ENCODE measurements at regions of chr11 and their contacts with region 1.

Region 1: GRCh38 chr11:8768625-8769333 is 86.2 kb downstream of the RPL27A start:
- DNase-seq: peak; percentile 15 to 61
- H3K4me3 ChIP-seq: no peak overlapping the region
- H3K27ac ChIP-seq: peak overlapping the region; percentile 66
- H3K4me1 ChIP-seq: peaks cover 30% of the 10 kb centered on the region
- H3K27me3 ChIP-seq: no peaks in the 10 kb centered on the region
- CTCF ChIP-seq: peak; percentile 28; the same call in 1 of the 2 replicates

Region 2: GRCh38 chr11:8604078-8604723 is 164.6 kb before region 1 on chr11:
- CTCF ChIA-PET with region 1: no interaction called
- POLR2A ChIA-PET with region 1: no interaction called
- intact Hi-C with region 1: no loop called
- DNase-seq: peak; percentile 33 to 92
- H3K4me3 ChIP-seq: no peak overlapping the region
- H3K27ac ChIP-seq: 0 out of 2 replicates have a peak overlapping the region, but pooled peaks have one; percentile 25
- H3K4me1 ChIP-seq: peaks cover 12% of the 10 kb centered on the region; the same call in 1 of the 2 replicates
- H3K27me3 ChIP-seq: no peaks in the 10 kb centered on the region
- CTCF ChIP-seq: peak; percentile 57; the same call in 1 of the 2 replicates

Region 3: DNA sequence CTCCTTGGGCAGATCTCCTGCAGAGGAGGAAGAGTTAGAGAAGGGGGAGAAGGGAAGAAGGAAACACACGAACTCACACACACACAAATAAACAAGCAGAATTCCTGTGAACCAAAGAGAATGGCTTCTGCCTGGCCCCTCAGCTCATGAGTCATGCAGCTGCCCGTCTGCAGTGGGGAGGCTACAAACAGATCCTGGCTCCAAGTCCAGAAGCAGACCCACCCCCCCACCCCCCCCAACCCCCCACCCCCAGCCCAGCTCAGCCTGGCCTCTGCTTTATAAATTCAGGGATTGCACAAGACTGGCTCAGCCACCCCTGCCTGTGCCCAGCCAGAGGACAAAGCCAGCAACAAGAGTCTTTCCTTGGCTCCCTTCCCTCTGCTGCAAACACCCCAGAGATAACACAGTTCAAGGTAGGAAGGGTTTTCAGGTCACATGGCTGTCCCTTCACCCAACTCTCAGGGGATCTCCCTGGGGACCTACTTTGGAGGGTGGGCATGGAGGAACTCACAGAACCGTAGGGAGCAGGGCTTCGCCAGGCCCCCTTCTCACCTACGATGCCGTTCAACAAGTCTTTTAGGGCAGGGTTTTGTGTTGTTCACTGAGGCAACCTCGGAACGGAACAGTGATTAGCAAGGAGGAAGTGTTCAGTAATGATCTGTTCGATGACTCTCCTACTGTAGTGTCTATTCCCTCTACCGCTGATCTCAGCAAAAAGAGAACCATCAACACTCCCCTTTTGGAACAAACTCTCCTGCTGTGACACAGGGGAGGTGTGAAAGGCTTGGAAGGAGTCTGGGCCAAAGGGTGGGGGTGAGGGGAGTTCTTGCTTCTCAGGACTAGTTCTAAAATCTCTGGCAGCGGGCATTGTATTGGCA is 50.7 kb before region 1 on chr11:
- CTCF ChIA-PET with region 1: interaction called, 3 read pairs
- POLR2A ChIA-PET with region 1: interaction called, 4 read pairs
- intact Hi-C with region 1: loop called (anchors 2 kb)
- DNase-seq: peak; percentile 57 to 70
- H3K4me3 ChIP-seq: peak overlapping the region; percentile 45; the same call in 1 of the 2 replicates
- H3K27ac ChIP-seq: peak overlapping the region; percentile 96
- H3K4me1 ChIP-seq: peaks cover 66% of the 10 kb centered on the region
- H3K27me3 ChIP-seq: no peaks in the 10 kb centered on the region
- CTCF ChIP-seq: no peak

Measured in PC-9 (cell line).